WTC11 (cell line): ENCODE measurements at regions of chr7 and their contacts with region 1.

Region 1: GRCh38 chr7:158976849-158977593 is 120.7 kb downstream of the DYNC2I1 start:
- DNase-seq: peak; percentile 94
- ATAC-seq: peak; percentile 77
- H3K4me3 Mint-ChIP-seq: peak overlapping the region; percentile 55
- H3K27ac Mint-ChIP-seq: 0 out of 2 replicates have a peak overlapping the region, but pooled peaks have one; percentile 86
- H3K4me1 Mint-ChIP-seq: peaks cover 20% of the 10 kb centered on the region
- H3K27me3 Mint-ChIP-seq: peaks cover 5% of the 10 kb centered on the region; the same call in 1 of the 2 replicates
- CTCF ChIP-seq: peak; percentile 94

Region 2: GRCh38 chr7:158863611-158864506 is 113.2 kb before region 1 on chr7:
- CTCF ChIA-PET with region 1: interaction called, 16 read pairs
- POLR2A ChIA-PET with region 1: interaction called, 3 read pairs
- DNase-seq: peak; percentile 37
- ATAC-seq: peak; percentile 34
- H3K4me3 Mint-ChIP-seq: peak overlapping the region; percentile 71
- H3K27ac Mint-ChIP-seq: peak overlapping the region; percentile 87
- H3K4me1 Mint-ChIP-seq: peaks cover 64% of the 10 kb centered on the region
- H3K27me3 Mint-ChIP-seq: no peaks in the 10 kb centered on the region; the same call in 1 of the 2 replicates
- CTCF ChIP-seq: no peak

Region 3: GRCh38 chr7:158957921-158958491 is 19.0 kb before region 1 on chr7:
- CTCF ChIA-PET with region 1: interaction called, 24 read pairs
- POLR2A ChIA-PET with region 1: no interaction called
- DNase-seq: peak; percentile 84
- ATAC-seq: peak; percentile 100
- H3K4me3 Mint-ChIP-seq: peak overlapping the region; percentile 66
- H3K27ac Mint-ChIP-seq: no peak overlapping the region
- H3K4me1 Mint-ChIP-seq: peaks cover 18% of the 10 kb centered on the region
- H3K27me3 Mint-ChIP-seq: peaks cover 4% of the 10 kb centered on the region
- CTCF ChIP-seq: no peak

Region 4: GRCh38 chr7:159000859-159001435 is 23.9 kb after region 1 on chr7:
- CTCF ChIA-PET with region 1: interaction called, 32 read pairs
- POLR2A ChIA-PET with region 1: no interaction called
- DNase-seq: no peak
- ATAC-seq: peak; percentile 91
- H3K4me3 Mint-ChIP-seq: no peak overlapping the region
- H3K27ac Mint-ChIP-seq: no peak overlapping the region
- H3K4me1 Mint-ChIP-seq: peaks cover 11% of the 10 kb centered on the region
- H3K27me3 Mint-ChIP-seq: peaks cover 20% of the 10 kb centered on the region
- CTCF ChIP-seq: no peak

Region 5: DNA sequence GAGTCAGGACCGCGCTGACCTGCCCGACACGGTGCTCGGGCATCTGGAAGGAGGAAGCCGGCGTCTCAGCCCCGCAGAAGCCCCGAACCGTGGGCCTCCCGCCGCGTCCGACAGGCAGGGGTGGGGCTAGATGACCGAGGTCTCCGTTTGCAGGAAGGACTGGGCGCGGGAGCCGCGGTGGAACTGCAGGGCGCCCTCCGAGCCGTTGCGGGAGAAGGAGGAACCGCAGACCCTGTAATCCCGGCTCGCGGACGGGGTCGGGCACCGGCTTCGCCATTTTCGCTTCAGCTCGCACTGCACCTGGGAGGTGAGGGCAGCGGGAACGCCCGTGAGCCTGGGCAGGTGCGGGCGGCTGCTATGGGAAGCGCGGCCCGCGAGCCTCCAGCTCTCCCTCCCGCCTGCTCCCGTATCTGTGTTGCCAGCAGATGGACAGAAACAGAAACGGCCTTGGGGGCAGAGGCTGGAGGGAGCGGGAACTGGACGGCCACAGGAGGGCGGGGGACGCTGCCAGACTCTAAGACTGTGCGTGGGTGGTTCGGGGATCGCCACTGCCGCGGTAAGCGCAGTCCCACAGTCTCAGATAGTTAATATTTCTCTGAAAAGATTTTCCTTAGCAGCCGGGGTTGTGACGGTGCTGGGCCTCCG is 53.6 kb after region 1 on chr7:
- CTCF ChIA-PET with region 1: interaction called, 17 read pairs
- POLR2A ChIA-PET with region 1: no interaction called
- DNase-seq: peak; percentile 88
- ATAC-seq: peak; percentile 74
- H3K4me3 Mint-ChIP-seq: peak overlapping the region; percentile 77
- H3K27ac Mint-ChIP-seq: peak overlapping the region; percentile 49
- H3K4me1 Mint-ChIP-seq: peaks cover 26% of the 10 kb centered on the region
- H3K27me3 Mint-ChIP-seq: peaks cover 5% of the 10 kb centered on the region; the same call in 1 of the 2 replicates
- CTCF ChIP-seq: peak; percentile 23; the same call in 1 of the 2 replicates